ENCODE measurements at regions of chr2 and their contacts with region 1.

Region 1: DNA sequence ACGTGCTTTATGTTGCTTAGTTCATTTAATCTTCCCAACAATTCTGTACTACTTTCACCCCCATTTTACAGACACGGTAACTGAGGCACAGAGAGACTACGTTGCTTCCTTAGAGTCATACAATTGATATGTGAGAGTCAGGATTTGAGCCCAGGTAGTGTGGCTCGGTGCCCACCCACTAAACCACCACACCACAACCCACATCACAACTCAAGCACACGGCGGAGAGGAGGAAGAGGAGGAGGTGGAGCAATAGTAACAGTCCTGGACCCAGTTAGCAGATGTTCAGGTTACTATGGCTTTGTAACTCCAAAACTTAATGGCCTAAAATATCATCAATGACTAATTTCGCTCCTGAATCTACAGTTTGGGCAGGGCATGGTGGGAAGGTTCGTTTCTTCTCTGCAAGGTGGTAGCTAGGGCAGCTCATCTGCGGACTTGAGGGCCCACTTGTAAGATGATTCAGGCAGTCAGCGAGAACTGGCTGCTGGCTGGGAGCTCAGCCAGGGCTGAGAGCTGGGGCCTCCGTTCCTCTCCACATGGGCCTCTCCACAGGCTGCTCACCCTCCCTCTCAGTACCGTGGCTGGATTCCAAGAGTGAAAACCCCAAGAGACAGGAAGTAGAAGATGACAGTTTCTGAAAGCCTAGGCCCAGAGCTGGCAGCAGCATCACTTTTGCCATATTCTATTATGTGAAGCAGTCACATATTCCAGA is 167.1 kb downstream of the ZFP36L2 start:
- DNase-seq: peak; percentile 8 to 84 (median 51)
- ATAC-seq: peak; percentile 85
- H3K4me3 ChIP-seq: no peak overlapping the region
- H3K4me3 Mint-ChIP-seq: peak overlapping the region; percentile 46
- H3K27ac ChIP-seq: peak overlapping the region; percentile 36 to 46
- H3K27ac Mint-ChIP-seq: peak overlapping the region; percentile 87
- H3K4me1 ChIP-seq: peaks cover 27% of the 10 kb centered on the region
- H3K4me1 Mint-ChIP-seq: peaks cover 28% of the 10 kb centered on the region
- H3K27me3 ChIP-seq: no peaks in the 10 kb centered on the region
- H3K27me3 Mint-ChIP-seq: no peaks in the 10 kb centered on the region
- CTCF ChIP-seq: no peak

Region 2: GRCh38 chr2:43038039-43038707 is 21.2 kb before region 1 on chr2:
- CTCF ChIA-PET with region 1: no interaction called
- POLR2A ChIA-PET with region 1: no interaction called
- intact Hi-C with region 1: loop called in 1 of 2 experiments (anchors 1 kb)
- DNase-seq: no peak
- ATAC-seq: no peak
- H3K4me3 ChIP-seq: no peak overlapping the region
- H3K4me3 Mint-ChIP-seq: no peak overlapping the region
- H3K27ac ChIP-seq: no peak overlapping the region
- H3K27ac Mint-ChIP-seq: no peak overlapping the region
- H3K4me1 ChIP-seq: peaks cover 23% of the 10 kb centered on the region
- H3K4me1 Mint-ChIP-seq: peaks cover 19% of the 10 kb centered on the region
- H3K27me3 ChIP-seq: no peaks in the 10 kb centered on the region
- H3K27me3 Mint-ChIP-seq: no peaks in the 10 kb centered on the region
- CTCF ChIP-seq: no peak